ENCODE measurements at regions of chr4 and their contacts with region 1.

Region 1: DNA sequence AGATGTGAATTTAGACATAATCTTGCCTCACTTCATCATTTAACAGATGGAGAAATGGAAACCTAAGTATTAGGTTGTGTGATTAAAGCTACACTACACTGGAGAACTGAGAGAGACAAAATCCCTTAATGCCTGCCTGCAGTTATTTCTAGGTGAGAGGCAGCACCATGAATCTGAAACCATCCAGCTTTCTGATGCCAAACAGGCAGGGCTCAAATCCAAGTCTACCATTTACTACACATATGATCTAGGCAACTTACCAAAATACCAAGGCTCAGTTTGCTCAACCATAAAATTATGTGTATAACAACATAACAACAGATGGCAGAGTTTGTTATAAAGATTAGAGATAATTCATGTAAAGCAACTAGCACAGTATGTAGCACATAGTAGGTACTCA is 38.7 kb downstream of the GABRA4 start:
- DNase-seq: no peak
- ATAC-seq: no peak
- H3K4me3 ChIP-seq: no peak overlapping the region
- H3K4me1 ChIP-seq: no peaks in the 10 kb centered on the region
- CTCF ChIP-seq: no peak

Region 2: DNA sequence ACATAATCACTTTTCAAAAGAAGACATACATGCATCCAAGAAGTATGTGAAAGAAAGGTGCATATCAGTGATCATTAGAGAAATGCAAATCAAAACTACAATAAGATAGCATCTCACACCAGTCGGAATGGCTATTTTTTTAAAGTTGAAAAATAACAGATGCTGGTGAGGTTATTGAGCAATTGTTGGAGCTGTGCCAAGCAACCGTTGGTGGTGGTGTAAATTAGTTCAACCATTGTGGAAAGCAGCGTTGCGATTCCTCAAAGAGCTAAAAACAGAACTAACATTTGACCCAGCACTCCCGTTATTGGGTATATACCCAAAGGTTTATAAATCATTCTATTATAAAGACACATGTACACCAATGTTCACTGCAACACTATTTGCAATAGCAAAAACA is 59.8 kb before region 1 on chr4:
- intact Hi-C with region 1: loop called in 1 of 2 experiments (anchors 10 kb)
- DNase-seq: no peak
- ATAC-seq: no peak
- H3K4me3 ChIP-seq: no peak overlapping the region
- H3K4me1 ChIP-seq: no peaks in the 10 kb centered on the region
- CTCF ChIP-seq: no peak

Region 3: DNA sequence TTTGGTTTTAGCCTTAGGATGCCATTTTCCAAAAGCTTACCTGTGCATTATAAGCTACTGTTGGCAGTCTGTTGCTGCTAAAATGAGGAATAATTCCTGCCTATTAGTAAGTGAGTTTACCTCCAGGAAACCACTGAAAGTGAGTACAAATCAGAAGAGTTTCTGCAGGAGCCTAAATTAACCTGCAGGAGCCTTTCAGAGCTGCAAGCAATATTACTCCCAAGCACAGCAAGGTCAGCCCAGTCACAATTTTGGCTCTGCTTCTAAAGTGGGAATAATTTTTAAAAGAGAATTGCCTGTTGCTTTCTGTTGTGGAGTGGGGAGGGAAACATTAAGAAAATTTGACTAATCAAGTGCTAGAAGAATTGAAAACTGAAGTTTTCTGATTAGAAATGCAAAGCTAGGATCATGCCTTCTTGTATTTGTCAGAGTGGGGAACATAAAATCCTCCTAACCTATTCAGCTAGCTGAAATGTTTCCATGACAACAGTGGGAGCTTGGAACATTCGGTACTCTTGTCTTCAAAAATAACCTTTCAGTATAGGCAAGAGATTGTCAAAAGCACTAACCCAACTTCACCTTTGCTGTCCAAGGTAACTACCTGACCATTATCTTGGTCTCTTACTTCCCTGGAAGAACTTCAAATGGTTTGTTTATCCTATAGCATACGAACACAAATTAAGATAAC is 315.7 kb after region 1 on chr4:
- intact Hi-C with region 1: no loop called
- DNase-seq: no peak
- ATAC-seq: no peak
- H3K4me3 ChIP-seq: no peak overlapping the region
- H3K4me1 ChIP-seq: no peaks in the 10 kb centered on the region
- CTCF ChIP-seq: no peak